ENCODE measurements at regions of chr14 and their contacts with region 1.

Region 1: DNA sequence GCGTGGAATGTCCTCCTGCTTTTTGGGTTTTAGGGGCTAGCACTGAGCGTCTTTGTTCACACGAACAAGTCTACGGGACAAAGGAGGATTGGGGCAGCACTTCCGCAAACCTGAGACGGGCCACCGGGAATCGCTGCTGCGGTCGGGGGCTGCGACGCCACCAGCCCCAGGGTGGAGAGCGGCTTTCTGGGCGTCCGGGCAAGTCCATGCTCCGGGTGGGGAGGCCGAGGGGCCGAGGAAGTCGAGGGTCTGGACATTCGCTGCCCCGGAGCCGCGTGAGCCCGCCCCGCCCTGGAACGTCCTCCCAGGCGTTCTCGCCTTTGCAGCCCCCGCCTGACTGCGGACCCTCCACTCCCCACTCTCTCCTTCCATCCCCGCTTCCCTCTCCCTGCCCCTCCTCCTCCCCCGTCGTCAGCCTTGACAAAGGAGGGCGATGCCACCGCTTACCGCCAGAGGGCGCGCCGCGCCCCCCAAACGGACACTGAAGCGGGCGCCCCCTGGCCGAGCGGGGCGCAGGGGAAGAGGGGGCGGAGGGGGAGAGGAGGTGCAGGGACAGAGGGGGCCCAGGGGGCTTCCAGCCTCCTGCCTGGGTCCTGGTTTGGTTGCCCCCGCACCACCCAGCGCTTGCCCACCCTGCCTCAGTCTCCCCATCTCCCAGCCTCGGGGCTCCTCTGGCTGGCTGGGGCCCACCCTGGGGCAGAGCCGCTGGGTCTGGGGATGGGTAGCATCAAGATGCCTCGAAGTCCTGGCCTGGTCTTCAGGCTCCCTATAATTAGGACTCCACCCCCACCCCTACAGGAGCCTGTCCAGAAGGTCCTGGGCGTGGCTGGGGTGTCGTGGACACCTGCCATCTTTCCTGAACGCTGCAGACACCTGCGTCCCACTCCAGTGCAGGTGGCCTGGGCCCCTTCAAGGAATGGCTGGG is 39.1 kb upstream of the INF2 start:
- DNase-seq: peak in 2 of 3 donors; percentile 79 to 82
- ATAC-seq: peak; percentile 93
- H3K4me3 ChIP-seq: no peak overlapping the region
- H3K4me1 ChIP-seq: peaks cover 6% of the 10 kb centered on the region
- CTCF ChIP-seq: peak; percentile 94

Region 2: GRCh38 chr14:104499784-104500760 is 150.2 kb before region 1 on chr14:
- intact Hi-C with region 1: no loop called
- DNase-seq: peak in 2 of 3 donors; percentile 34 to 36
- ATAC-seq: peak; percentile 93
- H3K4me3 ChIP-seq: no peak overlapping the region
- H3K4me1 ChIP-seq: no peaks in the 10 kb centered on the region
- CTCF ChIP-seq: no peak

Region 3: DNA sequence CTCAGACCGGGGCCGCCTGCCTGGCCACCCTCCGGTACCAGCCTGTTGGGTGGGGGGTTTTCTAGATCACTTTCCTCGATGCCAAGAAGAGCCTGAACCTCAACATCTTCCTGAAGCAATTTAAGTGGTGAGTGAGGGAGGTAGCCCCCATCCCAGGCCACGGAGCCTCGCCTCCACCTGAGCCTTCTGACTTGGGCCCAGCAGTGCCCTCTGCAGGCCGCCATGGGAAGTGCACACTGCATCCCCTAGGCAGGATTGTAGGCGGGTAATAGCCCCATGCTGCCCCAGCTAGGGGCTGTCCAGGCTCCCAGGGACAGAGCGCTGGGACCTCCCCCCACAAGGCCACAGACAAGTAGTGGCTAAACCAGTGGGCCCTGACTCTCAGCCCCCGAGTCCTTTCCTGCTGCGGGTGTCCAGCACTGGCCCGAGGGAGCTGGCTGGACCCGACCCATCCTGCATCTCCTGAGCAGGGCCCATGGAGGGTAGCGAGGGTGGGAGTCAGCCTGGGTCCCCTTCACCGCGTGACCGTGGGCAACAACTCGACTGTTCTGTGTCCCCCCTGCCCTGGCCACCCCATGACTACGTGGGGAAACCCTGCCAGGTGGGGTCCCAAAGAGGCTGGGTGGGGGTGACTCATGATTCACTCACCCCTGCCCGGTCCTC is 58.4 kb after region 1 on chr14:
- intact Hi-C with region 1: loop called (anchors 5 kb)
- DNase-seq: peak in 2 of 3 donors; percentile 80 to 85
- ATAC-seq: peak; percentile 79
- H3K4me3 ChIP-seq: no peak overlapping the region
- H3K4me1 ChIP-seq: no peaks in the 10 kb centered on the region
- CTCF ChIP-seq: peak; percentile 98

Region 4: GRCh38 chr14:105197271-105197670 is 547.0 kb after region 1 on chr14:
- intact Hi-C with region 1: no loop called
- DNase-seq: no peak
- ATAC-seq: no peak
- H3K4me3 ChIP-seq: no peak overlapping the region
- H3K4me1 ChIP-seq: peaks cover 16% of the 10 kb centered on the region
- CTCF ChIP-seq: no peak

Measured in mucosa of descending colon (tissue), 3 donors.